Activated T-helper 2 cell treated with anti-CD3 and anti-CD28 coated beads, Interferon-gamma antibody, Interleukin-2, Interleukin-4, amounts not matched to agents 10 μg/mL and 5 μg/mL and 100 μg/mL, durations not matched to agents 14 hours and 24 hours and 36 hours (primary cell): ENCODE measurements at regions of chr21 and their contacts with region 1.

Region 1: DNA sequence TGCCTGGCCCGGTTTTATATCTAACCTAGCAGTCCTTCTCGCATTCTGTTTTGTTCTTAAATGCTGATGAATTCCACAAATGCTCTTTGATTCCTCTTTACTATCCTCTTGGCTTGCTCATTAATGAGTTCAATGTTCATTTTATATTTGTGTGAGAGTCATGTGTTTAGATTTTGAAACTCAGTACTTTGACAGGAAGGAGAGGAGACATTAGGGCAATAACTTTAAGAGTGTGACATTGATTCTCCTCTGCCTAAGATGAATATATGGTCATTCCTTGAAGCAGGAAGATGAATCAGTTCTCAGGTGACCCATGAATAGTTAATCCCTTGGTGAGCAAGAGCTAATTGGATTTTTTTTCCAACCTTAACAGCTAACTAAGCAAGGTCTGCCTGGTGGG is 84.1 kb downstream of the MRPS6 start:
- DNase-seq: no peak
- H3K4me3 Mint-ChIP-seq: no peak overlapping the region
- H3K27ac Mint-ChIP-seq: peak overlapping the region; percentile 8
- H3K4me1 Mint-ChIP-seq: peaks cover 37% of the 10 kb centered on the region
- H3K27me3 Mint-ChIP-seq: no peaks in the 10 kb centered on the region

Region 2: DNA sequence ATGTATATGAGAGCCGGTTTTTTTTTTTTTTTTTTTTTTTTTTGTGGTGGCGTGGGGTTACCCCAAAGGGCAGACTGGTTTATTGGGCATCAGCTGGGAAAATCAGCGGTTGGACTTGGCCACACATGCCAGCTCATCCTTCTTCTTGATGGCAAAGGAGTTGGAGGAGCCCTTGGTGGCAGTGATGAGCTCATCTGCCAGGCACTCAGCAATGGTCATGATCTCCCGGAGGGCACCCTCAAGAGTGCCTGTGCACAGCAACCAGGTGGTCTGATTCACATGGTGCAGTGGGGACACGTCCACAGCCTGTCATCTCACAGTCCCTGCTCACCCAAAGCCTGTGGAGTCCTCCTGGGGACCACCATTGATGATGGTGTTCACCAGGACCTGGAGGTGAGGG is 22.2 kb before region 1 on chr21:
- intact Hi-C with region 1: no loop called
- DNase-seq: no peak
- H3K4me3 Mint-ChIP-seq: no peak overlapping the region
- H3K27ac Mint-ChIP-seq: no peak overlapping the region
- H3K4me1 Mint-ChIP-seq: peaks cover 44% of the 10 kb centered on the region
- H3K27me3 Mint-ChIP-seq: no peaks in the 10 kb centered on the region

Region 3: GRCh38 chr21:34190576-34191321 is 33.2 kb after region 1 on chr21:
- intact Hi-C with region 1: loop called (anchors 5 kb)
- DNase-seq: no peak
- H3K4me3 Mint-ChIP-seq: peak overlapping the region; percentile 45
- H3K27ac Mint-ChIP-seq: peak overlapping the region; percentile 94
- H3K4me1 Mint-ChIP-seq: peaks cover 34% of the 10 kb centered on the region
- H3K27me3 Mint-ChIP-seq: no peaks in the 10 kb centered on the region